Right ventricle myocardium inferior (tissue), 1 donor: ENCODE measurements at regions of chr1 and their contacts with region 1.

Region 1: GRCh38 chr1:111481387-111482221 is 7.8 kb downstream of the C1orf162 start:
- DNase-seq: peak; percentile 90
- ATAC-seq: peak; percentile 97

Region 2: GRCh38 chr1:111747282-111747734 is 265.7 kb after region 1 on chr1:
- intact Hi-C with region 1: loop called (anchors 5 kb)
- DNase-seq: no peak
- ATAC-seq: peak; percentile 20

Region 3: GRCh38 chr1:111769517-111770146 is 288.0 kb after region 1 on chr1:
- intact Hi-C with region 1: loop called (anchors 2 kb)
- DNase-seq: no peak
- ATAC-seq: peak; percentile 48